Psoas muscle (tissue), 8 donors: ENCODE measurements at regions of chr7 and their contacts with region 1.

Region 1: GRCh38 chr7:35993676-35994606 is 159.1 kb upstream of the EEPD1 start:
- DNase-seq: no peak
- ATAC-seq: peak in 1 of 4 donors; percentile 33
- H3K4me3 ChIP-seq: no peak overlapping the region
- H3K27ac ChIP-seq: no peak overlapping the region
- H3K4me1 ChIP-seq: peaks cover 3% of the 10 kb centered on the region
- H3K27me3 ChIP-seq: no peaks in the 10 kb centered on the region
- CTCF ChIP-seq: no peak

Region 2: DNA sequence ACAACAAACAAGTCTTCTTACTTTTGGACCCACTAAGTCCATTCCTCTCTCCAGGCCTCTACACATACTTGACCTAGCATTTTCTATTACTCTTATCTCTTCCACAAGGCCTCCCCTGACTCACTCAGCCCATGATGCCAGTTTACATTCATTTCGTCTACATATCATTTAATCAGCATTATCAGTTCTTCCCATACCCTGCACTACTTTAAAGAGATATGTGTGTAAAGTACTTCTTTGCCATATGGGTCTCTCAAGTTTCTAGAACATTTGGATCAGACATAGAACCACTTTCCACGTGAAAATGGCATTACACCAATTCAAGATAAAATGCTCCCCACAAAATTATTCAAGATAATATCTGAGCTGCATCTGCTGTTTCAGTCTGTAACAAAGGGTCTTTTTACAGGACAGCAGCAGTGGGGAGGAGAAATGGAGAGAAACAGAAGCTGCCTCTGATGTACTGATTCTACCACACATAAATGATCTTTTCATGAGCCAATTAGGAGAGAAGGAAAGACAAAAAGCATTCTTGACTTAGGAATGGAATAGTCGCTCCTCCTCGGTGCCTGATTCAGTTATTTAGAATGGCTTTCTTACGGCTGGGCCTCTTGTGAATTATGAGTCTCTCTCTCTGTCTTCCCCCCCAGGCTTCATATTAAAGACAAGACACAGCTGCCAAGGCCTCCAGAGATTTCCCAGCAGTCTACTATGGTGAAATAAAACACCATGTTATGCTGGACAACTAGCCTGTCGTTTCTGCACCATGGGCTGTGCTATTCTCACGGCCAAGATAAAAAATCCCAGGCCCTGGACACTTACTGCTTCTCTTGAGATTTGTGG is 240.0 kb before region 1 on chr7:
- intact Hi-C with region 1: no loop called
- DNase-seq: peak; percentile 26 to 55
- ATAC-seq: peak; percentile 78 to 92 (median 90)
- H3K4me3 ChIP-seq: peak overlapping the region; percentile 6
- H3K27ac ChIP-seq: peak overlapping the region; percentile 80
- H3K4me1 ChIP-seq: peaks cover 44% of the 10 kb centered on the region
- H3K27me3 ChIP-seq: no peaks in the 10 kb centered on the region
- CTCF ChIP-seq: no peak

Region 3: DNA sequence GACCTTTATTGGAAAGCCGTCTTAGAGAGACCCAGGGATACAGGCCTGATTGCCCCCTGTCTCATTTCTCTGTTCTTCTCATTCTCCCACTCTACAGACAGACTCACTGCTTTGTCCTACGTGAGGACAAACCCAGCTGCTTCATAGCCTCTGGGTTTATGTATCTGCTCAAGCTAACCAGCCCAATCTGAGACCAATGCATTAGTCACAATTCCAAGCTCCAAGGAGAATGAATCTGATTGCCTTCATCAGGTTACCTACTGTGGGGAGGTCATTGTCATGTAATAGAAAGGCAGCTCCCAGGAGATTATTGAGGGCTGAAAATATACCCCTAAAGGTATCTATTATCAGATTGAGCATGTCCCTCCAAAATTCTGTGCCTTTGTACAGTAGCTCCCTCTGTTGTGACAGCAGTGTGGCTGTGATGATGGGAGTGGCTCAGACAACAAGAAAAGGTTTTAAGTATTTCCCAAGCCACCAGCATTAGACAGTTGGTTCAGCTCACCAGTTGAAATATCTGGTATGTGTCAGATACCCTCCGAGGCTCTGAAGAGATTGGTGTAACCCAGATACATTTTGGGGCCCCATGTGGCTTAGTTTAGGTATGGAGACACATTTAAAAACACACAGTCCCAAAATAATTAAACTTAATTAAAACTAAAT is 36.0 kb after region 1 on chr7:
- intact Hi-C with region 1: loop called in 1 of 2 experiments (anchors 5 kb)
- DNase-seq: no peak
- ATAC-seq: no peak
- H3K4me3 ChIP-seq: no peak overlapping the region
- H3K27ac ChIP-seq: no peak overlapping the region
- H3K4me1 ChIP-seq: no peaks in the 10 kb centered on the region
- H3K27me3 ChIP-seq: no peaks in the 10 kb centered on the region
- CTCF ChIP-seq: no peak